B cell (primary cell): ENCODE measurements at regions of chr6 and their contacts with region 1.

Region 1: DNA sequence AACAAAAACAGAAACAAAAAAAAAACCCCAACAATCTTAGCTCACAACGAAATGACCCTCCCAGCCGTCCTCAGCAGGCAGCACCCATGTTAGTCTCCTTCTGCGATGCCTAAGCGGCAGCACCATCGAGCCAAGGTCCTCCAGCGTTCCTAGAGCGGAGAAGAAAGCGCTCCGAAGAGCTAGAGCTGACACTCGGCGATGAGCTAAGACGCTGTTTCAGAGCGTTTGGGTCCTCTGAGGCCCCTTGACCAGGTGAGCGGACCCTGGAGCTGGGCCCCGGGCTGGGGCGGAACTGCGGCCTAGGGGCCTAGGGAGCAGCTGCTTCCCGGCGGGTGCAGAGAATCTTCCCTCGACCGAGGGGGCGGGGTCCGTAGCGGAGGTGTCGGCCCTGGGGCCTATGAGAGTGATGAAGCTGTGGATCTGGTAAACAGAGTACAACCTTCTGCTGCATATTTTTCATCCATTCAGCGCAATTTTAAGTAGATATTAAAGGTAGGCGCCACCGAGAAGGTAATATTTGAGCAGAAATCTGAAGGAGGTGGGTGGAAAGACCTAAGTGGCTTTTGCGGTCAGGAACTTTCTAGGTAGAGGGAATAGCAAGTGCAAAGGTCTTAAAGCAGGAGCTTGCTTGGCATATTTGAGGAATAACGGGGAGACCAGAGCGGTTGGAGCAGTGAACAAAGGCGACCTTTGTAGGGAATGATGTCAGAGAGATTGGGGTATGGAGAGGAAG is at the start of gene ZSCAN26:
- DNase-seq: peak; percentile 95
- ATAC-seq: peak; percentile 96
- H3K4me3 ChIP-seq: peak within 1 kb of the TSS; percentile 62 to 100 (median 72)
- H3K4me3 Mint-ChIP-seq: no peak within 1 kb of the TSS
- H3K27ac ChIP-seq: peak within 1 kb of the TSS; percentile 66 to 77
- H3K27ac Mint-ChIP-seq: no peak within 1 kb of the TSS
- H3K4me1 ChIP-seq: peaks cover 10 to 18% of the 10 kb centered on the region in 2 donors
- H3K4me1 Mint-ChIP-seq: peaks cover 10% of the 10 kb centered on the region
- H3K27me3 ChIP-seq: peaks cover 0 to 3% (median 0%) of the 10 kb centered on the region in 4 experiments
- H3K27me3 Mint-ChIP-seq: no peaks in the 10 kb centered on the region
- CTCF ChIP-seq: no peak
- total RNA-seq, gene ZSCAN26: 29.3 and 31.8 TPM in 2 replicates

Region 2: GRCh38 chr6:27940766-27941165 is 326.4 kb before region 1 on chr6:
- CTCF ChIA-PET with region 1: no interaction called
- POLR2A ChIA-PET with region 1: no interaction called
- intact Hi-C with region 1: no loop called
- DNase-seq: no peak
- ATAC-seq: no peak
- H3K4me3 ChIP-seq: no peak overlapping the region
- H3K4me3 Mint-ChIP-seq: no peak overlapping the region
- H3K27ac ChIP-seq: no peak overlapping the region
- H3K27ac Mint-ChIP-seq: no peak overlapping the region
- H3K4me1 ChIP-seq: no peaks in the 10 kb centered on the region
- H3K4me1 Mint-ChIP-seq: no peaks in the 10 kb centered on the region
- H3K27me3 ChIP-seq: peaks cover 0 to 4% (median 0%) of the 10 kb centered on the region in 4 experiments
- H3K27me3 Mint-ChIP-seq: peaks cover 21% of the 10 kb centered on the region
- CTCF ChIP-seq: no peak

Region 3: DNA sequence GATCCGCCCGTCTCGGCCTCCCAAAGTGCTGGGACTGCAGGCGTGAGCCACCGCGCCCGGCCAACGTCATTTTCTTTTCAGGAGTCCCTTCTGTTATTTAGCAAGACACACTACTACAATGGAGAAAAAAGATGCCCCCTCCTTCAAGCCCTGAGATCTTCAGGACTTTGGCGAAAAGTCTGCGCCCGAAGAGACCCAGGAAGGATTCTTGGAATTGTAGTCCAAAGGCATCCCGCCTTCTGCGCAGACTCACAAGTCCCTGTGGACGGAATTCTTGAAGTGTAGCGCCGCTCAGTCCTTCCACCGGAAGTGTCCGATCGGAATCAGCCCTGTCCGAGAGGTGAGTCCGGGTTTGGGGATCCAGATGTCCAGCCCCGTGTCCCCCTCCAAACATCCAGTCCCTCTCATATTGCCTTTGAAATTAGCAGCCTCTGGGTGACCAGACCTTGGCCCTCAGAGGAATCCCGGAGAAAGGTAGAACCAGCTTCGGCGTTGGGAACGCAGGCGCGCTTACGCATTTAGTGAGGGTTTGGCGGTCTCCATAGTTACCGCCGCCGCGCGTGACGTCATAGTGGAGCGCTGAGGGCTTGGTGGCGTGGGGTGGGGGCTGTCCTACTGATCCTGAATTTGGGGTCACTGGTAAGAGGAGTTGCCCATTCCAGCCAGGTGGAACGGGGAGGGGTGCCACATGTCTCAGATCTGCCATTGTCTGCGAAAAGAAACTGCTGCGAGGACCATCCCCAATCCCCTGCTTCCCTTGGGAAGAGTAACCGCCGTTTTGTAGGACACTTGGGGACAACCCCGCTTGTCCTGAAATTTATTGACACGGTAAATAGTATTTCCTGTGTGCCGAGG is 186.3 kb before region 1 on chr6:
- CTCF ChIA-PET with region 1: no interaction called
- POLR2A ChIA-PET with region 1: no interaction called
- intact Hi-C with region 1: loop called (anchors 2 kb)
- DNase-seq: peak; percentile 98
- ATAC-seq: peak; percentile 67
- H3K4me3 ChIP-seq: peak overlapping the region; percentile 67 to 96 (median 88)
- H3K4me3 Mint-ChIP-seq: peak overlapping the region; percentile 92
- H3K27ac ChIP-seq: peak overlapping the region; percentile 94 to 100
- H3K27ac Mint-ChIP-seq: peak overlapping the region; percentile 98
- H3K4me1 ChIP-seq: peaks cover 10 to 22% of the 10 kb centered on the region in 2 donors
- H3K4me1 Mint-ChIP-seq: peaks cover 36% of the 10 kb centered on the region
- H3K27me3 ChIP-seq: no peaks in the 10 kb centered on the region
- H3K27me3 Mint-ChIP-seq: no peaks in the 10 kb centered on the region
- CTCF ChIP-seq: no peak

Region 4: GRCh38 chr6:28225056-28225834 is 41.9 kb before region 1 on chr6 and contains the start of gene ZSCAN9:
- CTCF ChIA-PET with region 1: no interaction called
- POLR2A ChIA-PET with region 1: interaction called, 5 read pairs
- intact Hi-C with region 1: loop called (anchors 1 kb)
- DNase-seq: peak; percentile 80
- ATAC-seq: peak; percentile 95
- H3K4me3 ChIP-seq: peak within 1 kb of the TSS; percentile 77 to 90 (median 89)
- H3K4me3 Mint-ChIP-seq: peak within 1 kb of the TSS; percentile 98
- H3K27ac ChIP-seq: peak within 1 kb of the TSS; percentile 25 to 75
- H3K27ac Mint-ChIP-seq: peak within 1 kb of the TSS; percentile 89
- H3K4me1 ChIP-seq: peaks cover 10 to 15% of the 10 kb centered on the region in 2 donors
- H3K4me1 Mint-ChIP-seq: peaks cover 22% of the 10 kb centered on the region
- H3K27me3 ChIP-seq: peaks cover 0 to 18% (median 7%) of the 10 kb centered on the region in 4 experiments
- H3K27me3 Mint-ChIP-seq: peaks cover 18% of the 10 kb centered on the region
- CTCF ChIP-seq: no peak
- total RNA-seq, gene ZSCAN9: 29.8 and 32.0 TPM in 2 replicates

Region 5: GRCh38 chr6:28335564-28336283 is 68.6 kb after region 1 on chr6 and contains the start of gene ZSCAN31:
- CTCF ChIA-PET with region 1: interaction called, 4 read pairs
- POLR2A ChIA-PET with region 1: interaction called, 3 read pairs
- intact Hi-C with region 1: loop called (anchors 1 kb)
- DNase-seq: peak; percentile 89
- ATAC-seq: peak; percentile 87
- H3K4me3 ChIP-seq: peak within 1 kb of the TSS; percentile 72 to 98 (median 86)
- H3K4me3 Mint-ChIP-seq: no peak within 1 kb of the TSS
- H3K27ac ChIP-seq: peak within 1 kb of the TSS; percentile 95 to 96
- H3K27ac Mint-ChIP-seq: no peak within 1 kb of the TSS
- H3K4me1 ChIP-seq: peaks cover 11 to 18% of the 10 kb centered on the region in 2 donors
- H3K4me1 Mint-ChIP-seq: no peaks in the 10 kb centered on the region
- H3K27me3 ChIP-seq: no peaks in the 10 kb centered on the region
- H3K27me3 Mint-ChIP-seq: no peaks in the 10 kb centered on the region
- CTCF ChIP-seq: no peak
- total RNA-seq, gene ZSCAN31: 2.9 and 4.6 TPM in 2 replicates

Region 6: GRCh38 chr6:28355743-28356665 is 88.9 kb after region 1 on chr6:
- CTCF ChIA-PET with region 1: interaction called, 22 read pairs
- POLR2A ChIA-PET with region 1: no interaction called
- intact Hi-C with region 1: no loop called
- DNase-seq: peak; percentile 81
- ATAC-seq: peak; percentile 87
- H3K4me3 ChIP-seq: peak overlapping the region; percentile 48 to 70 (median 61)
- H3K4me3 Mint-ChIP-seq: peak overlapping the region; percentile 99
- H3K27ac ChIP-seq: no peak overlapping the region
- H3K27ac Mint-ChIP-seq: peak overlapping the region; percentile 87
- H3K4me1 ChIP-seq: peaks cover 2 to 17% of the 10 kb centered on the region in 2 donors
- H3K4me1 Mint-ChIP-seq: peaks cover 18% of the 10 kb centered on the region
- H3K27me3 ChIP-seq: no peaks in the 10 kb centered on the region
- H3K27me3 Mint-ChIP-seq: no peaks in the 10 kb centered on the region
- CTCF ChIP-seq: peak; percentile 84

Region 7: GRCh38 chr6:28399350-28400121 is 132.4 kb after region 1 on chr6 and contains the start of gene ZSCAN12:
- CTCF ChIA-PET with region 1: no interaction called
- POLR2A ChIA-PET with region 1: interaction called, 6 read pairs
- intact Hi-C with region 1: loop called (anchors 2 kb)
- DNase-seq: peak; percentile 91
- ATAC-seq: peak; percentile 91
- H3K4me3 ChIP-seq: peak within 1 kb of the TSS; percentile 67 to 96 (median 75)
- H3K4me3 Mint-ChIP-seq: peak within 1 kb of the TSS; percentile 93
- H3K27ac ChIP-seq: peak within 1 kb of the TSS; percentile 35 to 87
- H3K27ac Mint-ChIP-seq: peak within 1 kb of the TSS; percentile 92
- H3K4me1 ChIP-seq: peaks cover 16 to 17% of the 10 kb centered on the region in 2 donors
- H3K4me1 Mint-ChIP-seq: peaks cover 34% of the 10 kb centered on the region
- H3K27me3 ChIP-seq: peaks cover 0 to 17% (median 8%) of the 10 kb centered on the region in 4 experiments
- H3K27me3 Mint-ChIP-seq: peaks cover 40% of the 10 kb centered on the region
- CTCF ChIP-seq: peak; percentile 78
- total RNA-seq, gene ZSCAN12: 14.8 and 15.6 TPM in 2 replicates